ENCODE measurements at regions of chr11 and their contacts with region 1.

Region 1: DNA sequence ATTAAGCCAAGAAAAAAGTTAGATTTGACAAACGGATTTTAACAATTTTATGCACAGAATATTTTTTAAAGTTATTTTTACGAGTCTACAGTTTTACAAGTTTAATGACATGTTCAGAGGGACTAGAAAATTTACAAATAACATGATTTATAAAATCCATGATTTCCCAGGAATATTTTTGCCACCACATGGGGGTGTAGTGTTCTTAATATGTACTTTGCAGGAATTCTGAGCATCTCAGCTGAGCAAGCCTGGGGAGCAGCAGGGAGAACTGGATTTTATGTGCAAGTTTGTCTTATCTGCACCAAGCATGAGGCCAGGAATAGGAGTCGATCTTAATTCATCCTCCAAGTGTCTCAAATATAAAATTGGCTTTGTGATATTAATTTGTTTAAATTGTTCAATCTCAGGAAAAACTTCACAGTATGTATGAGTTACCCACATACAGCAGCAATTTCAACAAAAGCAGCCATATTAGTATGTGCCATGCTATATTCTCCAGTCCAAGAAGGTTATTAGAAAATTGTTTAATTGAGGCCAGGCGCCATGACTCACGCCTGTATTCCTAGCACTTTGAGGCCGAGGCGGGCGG is 826.3 kb downstream of the DLG2 start:
- DNase-seq: peak; percentile 9 to 40
- H3K4me3 ChIP-seq: no peak overlapping the region
- H3K27ac ChIP-seq: no peak overlapping the region
- H3K4me1 ChIP-seq: no peaks in the 10 kb centered on the region
- H3K27me3 ChIP-seq: 0 out of 2 replicates have a peak, but pooled peaks cover 6% of the 10 kb centered on the region
- CTCF ChIP-seq: peak; percentile 71

Region 2: DNA sequence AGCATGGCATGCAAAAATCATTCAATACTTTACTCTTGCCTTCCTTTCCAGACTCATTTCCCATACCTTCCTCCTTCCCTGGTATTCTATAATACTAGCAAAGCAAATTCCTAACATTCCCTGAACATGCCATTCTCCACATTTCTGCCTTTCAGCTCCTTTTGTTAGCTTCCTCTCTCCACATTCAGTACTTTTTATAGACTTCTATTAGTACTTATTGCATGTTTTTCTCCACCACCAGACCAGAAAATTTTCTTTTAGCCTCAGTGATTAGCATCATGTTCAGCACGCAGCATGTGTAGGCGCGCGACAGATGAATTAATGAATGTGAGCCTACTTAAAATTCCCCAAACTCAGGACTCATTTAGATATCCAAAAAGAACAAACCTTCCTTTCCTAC is 109.0 kb before region 1 on chr11:
- CTCF ChIA-PET with region 1: no interaction called
- POLR2A ChIA-PET with region 1: no interaction called
- intact Hi-C with region 1: no loop called
- DNase-seq: no peak
- H3K4me3 ChIP-seq: no peak overlapping the region
- H3K27ac ChIP-seq: no peak overlapping the region
- H3K4me1 ChIP-seq: peaks cover 10% of the 10 kb centered on the region
- H3K27me3 ChIP-seq: no peaks in the 10 kb centered on the region
- CTCF ChIP-seq: no peak

Region 3: DNA sequence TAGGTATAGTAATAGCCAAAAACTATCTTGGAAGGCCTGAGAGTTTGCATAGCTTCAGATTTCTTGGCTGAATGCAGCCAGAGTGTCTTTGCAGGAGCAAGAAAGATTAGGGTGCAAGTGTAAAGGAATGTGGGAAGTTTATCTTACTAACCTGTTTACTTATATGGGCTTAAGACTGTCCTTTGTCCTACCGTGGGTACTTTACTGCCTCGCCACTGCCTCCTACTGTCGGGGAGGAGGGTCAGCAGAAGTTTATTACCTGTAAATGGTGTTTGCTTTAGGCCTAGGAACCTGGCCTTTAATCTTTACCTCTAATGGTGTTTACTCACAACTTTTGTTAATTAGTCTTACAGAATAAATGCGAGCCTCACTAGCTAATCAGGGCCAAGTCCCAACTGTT is 192.5 kb after region 1 on chr11:
- CTCF ChIA-PET with region 1: no interaction called
- POLR2A ChIA-PET with region 1: no interaction called
- intact Hi-C with region 1: loop called (anchors 2 kb)
- DNase-seq: peak in 1 of 2 experiments; percentile 1
- H3K4me3 ChIP-seq: no peak overlapping the region
- H3K27ac ChIP-seq: no peak overlapping the region
- H3K4me1 ChIP-seq: no peaks in the 10 kb centered on the region
- H3K27me3 ChIP-seq: no peaks in the 10 kb centered on the region
- CTCF ChIP-seq: peak; percentile 53

Region 4: DNA sequence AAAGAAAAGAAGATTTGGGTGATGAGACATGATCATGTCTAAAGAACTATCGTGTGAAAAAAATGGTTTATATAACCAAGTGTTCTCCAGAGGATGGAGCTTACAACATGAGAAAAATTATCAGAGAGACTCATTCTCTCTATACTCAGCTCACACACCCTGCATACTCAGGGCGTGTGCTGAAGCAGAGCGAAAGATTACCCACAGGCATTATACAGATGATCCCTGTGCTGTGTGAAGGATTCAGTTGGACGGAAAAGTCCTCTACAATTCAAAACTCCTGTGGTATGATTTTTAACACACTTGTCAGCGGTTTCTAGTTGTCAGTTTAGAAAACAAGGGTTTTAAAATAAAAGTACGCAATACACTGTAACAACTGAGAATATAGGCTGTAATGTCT is 559.0 kb after region 1 on chr11:
- CTCF ChIA-PET with region 1: no interaction called
- POLR2A ChIA-PET with region 1: no interaction called
- intact Hi-C with region 1: no loop called
- DNase-seq: no peak
- H3K4me3 ChIP-seq: no peak overlapping the region
- H3K27ac ChIP-seq: no peak overlapping the region
- H3K4me1 ChIP-seq: no peaks in the 10 kb centered on the region
- H3K27me3 ChIP-seq: no peaks in the 10 kb centered on the region
- CTCF ChIP-seq: no peak

Measured in PC-9 (cell line).